Endothelial cell of umbilical vein (primary cell): ENCODE measurements at regions of chr1 and their contacts with region 1.

Region 1: DNA sequence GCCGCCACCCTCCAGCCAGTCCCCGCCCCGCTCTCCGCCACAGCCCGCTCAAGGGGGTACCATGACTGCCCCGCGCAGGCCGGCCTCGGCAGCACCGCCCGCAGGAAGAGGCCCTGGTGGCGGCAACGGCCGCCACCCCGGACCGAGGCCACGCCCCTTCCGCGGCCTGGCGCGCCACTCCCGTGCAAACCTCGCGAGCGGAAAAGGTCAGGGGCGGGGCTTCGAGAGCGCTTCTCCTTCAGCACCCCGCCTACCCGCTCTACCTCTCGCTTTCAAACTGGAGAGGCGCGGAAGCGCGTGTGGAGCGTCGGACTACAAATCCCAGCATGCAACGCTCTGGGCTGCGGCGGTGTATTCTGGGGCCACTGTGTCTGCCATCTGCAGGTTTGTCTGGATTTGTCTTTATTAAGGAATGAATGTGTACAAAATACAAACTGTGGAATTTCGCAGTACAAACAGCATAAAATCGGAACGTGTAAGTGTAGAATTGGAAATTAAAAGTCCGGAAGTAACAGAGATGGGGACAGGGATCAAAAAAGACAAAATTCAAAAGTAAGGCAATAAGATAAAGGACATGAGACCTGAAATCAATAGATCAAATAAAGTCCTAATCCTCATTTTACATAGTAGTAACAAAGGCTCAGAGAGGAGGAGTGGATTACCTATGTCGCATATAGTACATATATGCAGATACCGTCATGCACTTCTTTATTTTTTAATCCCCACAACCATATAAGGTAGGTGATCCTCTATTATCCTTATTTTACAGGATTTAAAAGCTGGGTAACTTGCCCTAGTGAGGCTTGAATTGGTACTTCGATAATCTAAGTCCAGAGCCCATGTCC is 464 bp upstream of the ADSS2 start:
- DNase-seq: peak; percentile 99
- H3K4me3 ChIP-seq: peak overlapping the region in 2 of 3 experiments; percentile 66 to 94
- H3K27ac ChIP-seq: peak overlapping the region; percentile 42
- H3K4me1 ChIP-seq: peaks cover 39% of the 10 kb centered on the region
- H3K27me3 ChIP-seq: no peaks in the 10 kb centered on the region
- CTCF ChIP-seq: peak; percentile 55 to 60
- POLR2A ChIP-seq: no peak

Region 2: GRCh38 chr1:243343970-243344937 is 1107.9 kb before region 1 on chr1:
- CTCF ChIA-PET with region 1: no interaction called
- POLR2A ChIA-PET with region 1: no interaction called
- dilution Hi-C with region 1: no loop called
- intact Hi-C with region 1: loop called (anchors 10 kb)
- DNase-seq: peak; percentile 51
- H3K4me3 ChIP-seq: no peak overlapping the region
- H3K27ac ChIP-seq: no peak overlapping the region
- H3K4me1 ChIP-seq: peaks cover 17% of the 10 kb centered on the region
- H3K27me3 ChIP-seq: no peaks in the 10 kb centered on the region
- CTCF ChIP-seq: peak; percentile 20 to 37
- POLR2A ChIP-seq: no peak

Region 3: GRCh38 chr1:244163861-244164562 is 288.2 kb before region 1 on chr1:
- CTCF ChIA-PET with region 1: no interaction called
- POLR2A ChIA-PET with region 1: no interaction called
- dilution Hi-C with region 1: no loop called
- intact Hi-C with region 1: loop called (anchors 10 kb)
- DNase-seq: peak; percentile 95
- H3K4me3 ChIP-seq: peak overlapping the region in 1 of 3 experiments; percentile 18
- H3K27ac ChIP-seq: peak overlapping the region; percentile 99
- H3K4me1 ChIP-seq: peaks cover 32% of the 10 kb centered on the region
- H3K27me3 ChIP-seq: no peaks in the 10 kb centered on the region
- CTCF ChIP-seq: no peak
- POLR2A ChIP-seq: peak; percentile 52

Region 4: GRCh38 chr1:244353551-244354091 is 98.6 kb before region 1 on chr1:
- CTCF ChIA-PET with region 1: no interaction called
- POLR2A ChIA-PET with region 1: no interaction called
- dilution Hi-C with region 1: no loop called
- intact Hi-C with region 1: loop called (anchors 1 kb)
- DNase-seq: peak; percentile 98
- H3K4me3 ChIP-seq: no peak overlapping the region
- H3K27ac ChIP-seq: peak overlapping the region; percentile 72
- H3K4me1 ChIP-seq: peaks cover 39% of the 10 kb centered on the region
- H3K27me3 ChIP-seq: no peaks in the 10 kb centered on the region
- CTCF ChIP-seq: no peak
- POLR2A ChIP-seq: peak; percentile 58

Region 5: GRCh38 chr1:244652699-244653466 is 200.7 kb after region 1 on chr1 and contains the start of gene DESI2:
- CTCF ChIA-PET with region 1: no interaction called
- POLR2A ChIA-PET with region 1: no interaction called
- dilution Hi-C with region 1: no loop called
- intact Hi-C with region 1: loop called (anchors 1 kb)
- DNase-seq: peak; percentile 99
- H3K4me3 ChIP-seq: peak within 1 kb of the TSS; percentile 58 to 98 (median 90)
- H3K27ac ChIP-seq: peak within 1 kb of the TSS; percentile 83
- H3K4me1 ChIP-seq: peaks cover 16% of the 10 kb centered on the region
- H3K27me3 ChIP-seq: peaks cover 2 to 3% of the 10 kb centered on the region in 2 experiments
- CTCF ChIP-seq: peak; percentile 31 to 54
- POLR2A ChIP-seq: peak; percentile 96
- total RNA-seq, gene DESI2: 37.2 TPM in 2 replicates

Region 6: DNA sequence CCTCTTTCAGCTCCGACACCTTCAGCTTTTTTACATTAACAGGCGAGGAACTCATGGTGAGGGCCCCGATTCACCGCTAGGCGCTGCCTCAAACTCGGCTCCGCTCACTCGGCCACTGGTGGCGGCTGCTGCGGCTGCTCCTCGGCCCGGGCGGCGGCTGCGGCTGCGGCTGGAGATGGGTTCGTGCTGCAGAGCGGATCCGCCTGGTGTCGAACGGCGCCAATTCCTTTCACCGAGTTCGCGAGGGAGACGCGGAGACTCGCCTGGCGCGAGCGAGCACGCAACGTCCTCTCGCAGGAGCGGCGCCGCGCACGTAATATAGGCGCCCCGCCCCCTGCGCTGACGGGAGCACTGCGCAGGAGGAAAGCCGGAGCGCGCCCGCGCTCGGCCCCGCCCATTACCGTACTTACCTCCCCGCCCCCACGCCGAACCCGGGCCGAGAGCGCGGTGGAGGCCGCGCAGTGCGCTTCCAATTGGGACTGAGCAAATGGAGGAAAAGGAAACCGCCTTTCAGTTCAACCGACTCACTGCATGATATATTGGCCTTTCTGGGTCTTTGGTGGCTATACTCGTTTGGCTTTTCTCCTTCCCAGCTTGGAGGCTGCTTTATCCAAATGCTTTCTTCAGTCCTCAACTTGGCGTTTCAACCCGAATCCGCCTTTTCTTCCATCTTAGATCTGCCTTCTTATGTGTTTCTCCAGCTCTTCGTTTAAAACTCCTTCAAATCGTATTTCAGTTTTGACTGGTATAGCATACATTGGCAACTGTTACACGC is 412.3 kb after region 1 on chr1 and contains the start of gene HNRNPU:
- CTCF ChIA-PET with region 1: no interaction called
- POLR2A ChIA-PET with region 1: no interaction called
- dilution Hi-C with region 1: no loop called
- intact Hi-C with region 1: loop called (anchors 1 kb)
- DNase-seq: peak; percentile 98
- H3K4me3 ChIP-seq: peak within 1 kb of the TSS; percentile 87 to 96 (median 94)
- H3K27ac ChIP-seq: peak within 1 kb of the TSS; percentile 89
- H3K4me1 ChIP-seq: peaks cover 30% of the 10 kb centered on the region
- H3K27me3 ChIP-seq: no peaks in the 10 kb centered on the region
- CTCF ChIP-seq: peak; percentile 26 to 33
- POLR2A ChIP-seq: peak; percentile 96
- total RNA-seq, gene HNRNPU: 398 and 417 TPM in 2 replicates